Thyroid gland (tissue), 4 donors: ENCODE measurements at regions of chr9 and their contacts with region 1.

Region 1: GRCh38 chr9:127943731-127944144 is 6.1 kb upstream of the DPM2 start:
- DNase-seq: peak; percentile 62 to 70
- H3K4me3 ChIP-seq: no peak overlapping the region
- H3K27ac ChIP-seq: no peak overlapping the region
- H3K4me1 ChIP-seq: peaks cover 30 to 40% of the 10 kb centered on the region in 2 donors
- H3K27me3 ChIP-seq: no peaks in the 10 kb centered on the region
- CTCF ChIP-seq: peak; percentile 39 to 72 (median 56)
- POLR2A ChIP-seq: no peak

Region 2: GRCh38 chr9:126939821-126940221 is 1003.9 kb before region 1 on chr9:
- intact Hi-C with region 1: no loop called
- DNase-seq: no peak
- H3K4me3 ChIP-seq: no peak overlapping the region
- H3K27ac ChIP-seq: no peak overlapping the region
- H3K4me1 ChIP-seq: no peaks in the 10 kb centered on the region
- H3K27me3 ChIP-seq: no peaks in the 10 kb centered on the region
- CTCF ChIP-seq: no peak
- POLR2A ChIP-seq: no peak

Region 3: GRCh38 chr9:127503947-127504782 is 439.6 kb before region 1 on chr9:
- intact Hi-C with region 1: no loop called
- DNase-seq: peak; percentile 77
- H3K4me3 ChIP-seq: no peak overlapping the region
- H3K27ac ChIP-seq: peak overlapping the region in 2 of 3 donors; percentile 5 to 49
- H3K4me1 ChIP-seq: no peaks in the 10 kb centered on the region
- H3K27me3 ChIP-seq: no peaks in the 10 kb centered on the region
- CTCF ChIP-seq: peak; percentile 47 to 85 (median 74)
- POLR2A ChIP-seq: no peak

Region 4: DNA sequence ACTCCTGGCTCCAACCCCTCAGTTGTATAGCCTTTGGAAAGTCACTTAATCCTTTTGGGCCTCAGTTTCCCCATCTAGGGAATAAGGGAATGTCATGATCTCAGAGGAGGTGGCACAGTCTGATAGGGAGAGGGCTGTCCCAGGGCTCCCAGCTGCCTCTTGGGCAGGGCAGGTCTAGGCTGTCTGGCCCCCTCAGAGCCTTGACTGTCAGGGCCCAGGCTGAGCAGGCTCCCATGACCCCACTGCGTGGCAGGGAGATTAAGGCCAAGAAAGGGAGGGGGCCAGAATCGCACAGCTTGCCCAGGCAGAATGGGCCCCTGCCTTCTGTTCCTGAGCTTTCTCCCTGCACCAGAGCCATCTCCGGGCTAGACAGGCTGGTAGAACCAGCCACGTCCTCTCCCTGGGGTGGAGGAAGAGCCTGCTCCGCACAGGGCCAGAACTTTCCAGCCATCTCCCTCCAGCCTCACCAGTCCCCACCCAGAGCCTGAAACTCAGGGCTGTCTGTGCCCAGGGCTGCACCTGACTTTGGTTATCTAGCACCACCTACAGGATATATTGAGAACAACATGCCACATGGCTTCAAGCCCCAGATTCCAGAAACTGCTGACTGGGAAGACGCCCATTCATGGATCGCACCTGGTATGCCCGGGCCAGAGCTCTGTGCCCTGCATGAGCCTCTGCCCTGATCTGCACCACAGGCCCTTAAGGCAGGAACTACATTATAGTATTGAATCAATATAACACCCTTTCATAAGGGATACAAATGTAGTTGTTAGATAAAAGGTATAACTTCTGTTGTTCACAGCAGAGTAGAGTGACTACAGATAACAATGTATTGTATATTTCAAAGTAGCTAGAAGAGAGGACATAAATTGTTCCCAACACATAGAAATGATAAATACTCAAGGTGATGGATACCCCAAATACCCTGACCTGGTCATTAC is 91.4 kb after region 1 on chr9:
- intact Hi-C with region 1: loop called (anchors 2 kb)
- DNase-seq: peak; percentile 74 to 80
- H3K4me3 ChIP-seq: no peak overlapping the region
- H3K27ac ChIP-seq: peak overlapping the region in 1 of 3 donors; percentile 56
- H3K4me1 ChIP-seq: peaks cover 0 to 3% of the 10 kb centered on the region in 2 donors
- H3K27me3 ChIP-seq: no peaks in the 10 kb centered on the region
- CTCF ChIP-seq: peak; percentile 78 to 97 (median 90)
- POLR2A ChIP-seq: no peak